HepG2 (cell line): ENCODE measurements at regions of chr10 and their contacts with region 1.

Region 1: GRCh38 chr10:91632671-91633550 is at the start of gene PPP1R3C:
- DNase-seq: peak; percentile 87
- ATAC-seq: peak; percentile 98
- H3K4me3 ChIP-seq: peak within 1 kb of the TSS; percentile 69 to 87 (median 87)
- H3K27ac ChIP-seq: peak within 1 kb of the TSS; percentile 76
- H3K4me1 ChIP-seq: peaks cover 62% of the 10 kb centered on the region
- H3K27me3 ChIP-seq: no peaks in the 10 kb centered on the region
- CTCF ChIP-seq: peak; percentile 76
- EP300 ChIP-seq: 0 out of 4 replicates have a peak, but pooled peaks of 1 of the 2 experiments have one; percentile 2
- POLR2A ChIP-seq: peak; percentile 92 to 99
- RAD21 ChIP-seq: peak; percentile 55; the same call in 1 of the 2 replicates
- total RNA-seq, gene PPP1R3C: 14.8 and 18.7 TPM in 2 replicates

Region 2: GRCh38 chr10:91389636-91390512 is 243.0 kb before region 1 on chr10:
- CTCF ChIA-PET with region 1: interaction called, 12 read pairs
- POLR2A ChIA-PET with region 1: no interaction called
- in situ Hi-C with region 1: loop called (anchors 25 kb)
- intact Hi-C with region 1: loop called (anchors 1 kb)
- DNase-seq: peak; percentile 54
- ATAC-seq: peak; percentile 88
- H3K4me3 ChIP-seq: peak overlapping the region in 2 of 3 experiments; percentile 12 to 22; a peak in 2 of 6 replicates
- H3K27ac ChIP-seq: no peak overlapping the region
- H3K4me1 ChIP-seq: peaks cover 8% of the 10 kb centered on the region; the same call in 1 of the 2 replicates
- H3K27me3 ChIP-seq: peaks cover 0 to 9% of the 10 kb centered on the region in 2 experiments; a peak in 2 of 5 replicates
- CTCF ChIP-seq: peak; percentile 67
- EP300 ChIP-seq: no peak
- POLR2A ChIP-seq: no peak
- RAD21 ChIP-seq: 0 out of 2 replicates have a peak, but pooled peaks have one; percentile 26

Region 3: DNA sequence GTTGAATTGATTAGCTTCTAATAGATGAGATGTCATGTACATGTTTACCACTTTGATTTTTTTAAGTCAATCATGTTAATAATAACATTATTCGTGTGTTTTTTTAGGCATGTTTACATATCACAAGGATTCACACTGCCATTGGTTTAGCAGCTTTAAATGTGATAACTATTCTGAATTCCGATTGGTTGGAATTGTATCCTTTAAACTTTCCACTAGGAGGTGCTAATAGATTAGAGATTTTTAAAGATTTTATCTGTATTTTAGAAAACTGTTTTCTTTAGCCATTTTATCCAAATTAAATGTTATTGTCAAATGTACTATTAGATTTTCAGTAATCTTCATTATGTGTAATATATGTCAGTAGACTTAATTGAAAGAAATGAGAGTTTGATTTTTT is 139.6 kb before region 1 on chr10:
- CTCF ChIA-PET with region 1: interaction called, 40 read pairs
- POLR2A ChIA-PET with region 1: interaction called, 6 read pairs
- in situ Hi-C with region 1: loop called (anchors 5 kb)
- intact Hi-C with region 1: loop called (anchors 1 kb)
- DNase-seq: peak; percentile 41
- ATAC-seq: peak; percentile 50; the same call in 2 of the 3 replicates
- H3K4me3 ChIP-seq: no peak overlapping the region
- H3K27ac ChIP-seq: no peak overlapping the region
- H3K4me1 ChIP-seq: no peaks in the 10 kb centered on the region
- H3K27me3 ChIP-seq: no peaks in the 10 kb centered on the region
- CTCF ChIP-seq: peak; percentile 50
- EP300 ChIP-seq: no peak
- POLR2A ChIP-seq: no peak
- RAD21 ChIP-seq: no peak

Region 4: DNA sequence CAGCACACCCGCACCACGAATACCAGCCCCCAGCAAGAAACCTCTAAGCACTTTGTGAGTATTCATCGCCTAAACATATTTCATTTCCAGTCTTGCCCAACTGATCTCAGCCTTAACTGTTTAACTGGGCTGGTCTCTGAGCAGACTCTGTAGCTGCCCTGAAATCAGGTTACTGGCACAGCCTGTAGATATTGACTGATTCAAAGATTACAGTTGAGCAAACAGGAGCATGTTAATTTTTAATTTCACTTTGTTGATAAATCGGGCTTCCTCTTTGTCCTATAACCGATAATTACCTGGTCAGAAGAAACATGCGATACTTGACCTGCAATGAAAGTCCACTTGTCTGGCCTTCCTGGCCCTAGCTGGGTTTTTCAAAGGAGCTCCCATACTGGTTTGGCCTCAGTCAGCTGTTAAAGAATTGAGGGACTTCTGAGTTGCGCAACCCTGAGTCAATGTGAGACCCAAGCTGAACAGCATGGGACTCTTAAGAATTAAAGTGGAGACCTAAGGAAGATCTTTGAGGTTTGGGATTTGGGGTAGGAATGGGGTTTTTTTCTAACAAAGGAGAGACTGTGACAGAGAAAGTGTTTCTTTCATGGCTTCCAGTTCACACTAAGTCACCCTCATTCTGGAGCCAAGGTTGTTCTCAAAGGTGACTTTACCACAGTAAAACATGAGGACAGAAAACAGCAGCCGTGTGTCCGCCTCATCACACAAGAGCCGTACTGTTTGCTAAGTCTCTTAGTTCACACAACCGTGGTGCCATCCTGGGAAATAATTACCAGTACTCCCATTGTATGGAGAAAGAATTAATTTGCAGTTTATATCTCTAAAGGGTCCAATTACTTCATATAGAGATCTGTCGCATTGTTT is 76.0 kb before region 1 on chr10:
- CTCF ChIA-PET with region 1: interaction called, 31 read pairs
- POLR2A ChIA-PET with region 1: interaction called, 23 read pairs
- in situ Hi-C with region 1: loop called (anchors 5 kb)
- intact Hi-C with region 1: loop called (anchors 1 kb)
- DNase-seq: peak; percentile 95
- ATAC-seq: peak; percentile 95
- H3K4me3 ChIP-seq: peak overlapping the region in 1 of 3 experiments; percentile 34; a peak in 1 of 6 replicates
- H3K27ac ChIP-seq: peak overlapping the region; percentile 87
- H3K4me1 ChIP-seq: peaks cover 96% of the 10 kb centered on the region
- H3K27me3 ChIP-seq: no peaks in the 10 kb centered on the region
- CTCF ChIP-seq: no peak
- EP300 ChIP-seq: peak; percentile 31 to 94; a peak in 2 of 4 replicates
- POLR2A ChIP-seq: 0 out of 4 replicates have a peak, but pooled peaks have one; percentile 11 to 33
- RAD21 ChIP-seq: peak; percentile 19; the same call in 1 of the 2 replicates

Region 5: GRCh38 chr10:91607646-91608403 is 25.1 kb before region 1 on chr10:
- CTCF ChIA-PET with region 1: no interaction called
- POLR2A ChIA-PET with region 1: interaction called, 35 read pairs
- in situ Hi-C with region 1: no loop called
- intact Hi-C with region 1: no loop called
- DNase-seq: no peak
- ATAC-seq: peak; percentile 39
- H3K4me3 ChIP-seq: peak overlapping the region in 1 of 3 experiments; percentile 52; a peak in 1 of 6 replicates
- H3K27ac ChIP-seq: no peak overlapping the region
- H3K4me1 ChIP-seq: peaks cover 37% of the 10 kb centered on the region
- H3K27me3 ChIP-seq: no peaks in the 10 kb centered on the region
- CTCF ChIP-seq: no peak
- EP300 ChIP-seq: no peak
- POLR2A ChIP-seq: no peak
- RAD21 ChIP-seq: no peak

Region 6: GRCh38 chr10:91621483-91622113 is 11.3 kb before region 1 on chr10:
- CTCF ChIA-PET with region 1: no interaction called
- POLR2A ChIA-PET with region 1: interaction called, 16 read pairs
- in situ Hi-C with region 1: no loop called
- intact Hi-C with region 1: no loop called
- DNase-seq: no peak
- ATAC-seq: no peak
- H3K4me3 ChIP-seq: no peak overlapping the region
- H3K27ac ChIP-seq: no peak overlapping the region
- H3K4me1 ChIP-seq: peaks cover 8% of the 10 kb centered on the region; the same call in 1 of the 2 replicates
- H3K27me3 ChIP-seq: peaks cover 0 to 1% of the 10 kb centered on the region in 2 experiments; a peak in 2 of 5 replicates
- CTCF ChIP-seq: no peak
- EP300 ChIP-seq: no peak
- POLR2A ChIP-seq: no peak
- RAD21 ChIP-seq: no peak

Region 7: GRCh38 chr10:91672021-91672608 is 39.2 kb after region 1 on chr10:
- CTCF ChIA-PET with region 1: no interaction called
- POLR2A ChIA-PET with region 1: no interaction called
- in situ Hi-C with region 1: no loop called
- intact Hi-C with region 1: no loop called
- DNase-seq: no peak
- ATAC-seq: peak; percentile 58; the same call in 2 of the 3 replicates
- H3K4me3 ChIP-seq: no peak overlapping the region
- H3K27ac ChIP-seq: no peak overlapping the region
- H3K4me1 ChIP-seq: no peaks in the 10 kb centered on the region
- H3K27me3 ChIP-seq: no peaks in the 10 kb centered on the region
- CTCF ChIP-seq: no peak
- EP300 ChIP-seq: no peak
- POLR2A ChIP-seq: no peak
- RAD21 ChIP-seq: no peak

Region 8: DNA sequence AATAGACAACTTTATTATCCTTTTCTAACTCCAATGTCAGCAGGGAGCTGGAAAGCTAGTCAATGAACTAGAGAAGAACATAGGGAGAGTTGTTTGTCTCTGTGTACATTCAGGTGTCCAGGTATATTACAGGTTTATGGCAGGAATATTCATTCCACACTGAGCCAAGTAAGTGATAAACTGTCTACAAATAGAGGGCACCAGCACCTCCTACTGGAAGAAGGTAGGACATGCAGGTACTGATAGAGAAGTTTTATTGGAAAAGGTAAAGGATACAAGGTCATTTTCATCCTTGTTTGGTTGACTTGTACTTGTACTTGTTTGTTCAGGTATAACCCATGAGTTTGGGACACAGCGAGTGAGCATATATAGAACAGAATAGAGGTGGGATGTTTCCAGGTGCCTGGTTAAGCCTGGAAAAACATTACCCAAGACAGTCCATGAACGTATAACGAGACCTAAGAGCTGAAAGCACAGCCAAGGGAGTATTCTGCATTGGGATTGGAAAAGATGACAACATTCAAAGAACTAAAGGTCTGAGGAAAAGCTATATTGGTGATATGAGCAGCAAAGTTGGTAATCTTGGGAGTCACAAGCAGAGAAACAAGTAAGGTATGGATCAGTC is 61.4 kb after region 1 on chr10:
- CTCF ChIA-PET with region 1: no interaction called
- POLR2A ChIA-PET with region 1: no interaction called
- in situ Hi-C with region 1: no loop called
- intact Hi-C with region 1: no loop called
- DNase-seq: peak; percentile 38
- ATAC-seq: peak; percentile 50; the same call in 2 of the 3 replicates
- H3K4me3 ChIP-seq: no peak overlapping the region
- H3K27ac ChIP-seq: no peak overlapping the region
- H3K4me1 ChIP-seq: no peaks in the 10 kb centered on the region
- H3K27me3 ChIP-seq: no peaks in the 10 kb centered on the region
- CTCF ChIP-seq: peak; percentile 76
- EP300 ChIP-seq: no peak
- POLR2A ChIP-seq: no peak
- RAD21 ChIP-seq: no peak

Region 9: GRCh38 chr10:91724933-91725332 is 92.0 kb after region 1 on chr10:
- CTCF ChIA-PET with region 1: no interaction called
- POLR2A ChIA-PET with region 1: no interaction called
- in situ Hi-C with region 1: no loop called
- intact Hi-C with region 1: no loop called
- DNase-seq: no peak
- ATAC-seq: no peak
- H3K4me3 ChIP-seq: no peak overlapping the region
- H3K27ac ChIP-seq: no peak overlapping the region
- H3K4me1 ChIP-seq: no peaks in the 10 kb centered on the region
- H3K27me3 ChIP-seq: no peaks in the 10 kb centered on the region
- CTCF ChIP-seq: no peak
- EP300 ChIP-seq: no peak
- POLR2A ChIP-seq: no peak
- RAD21 ChIP-seq: no peak

Region 10: GRCh38 chr10:92404612-92405418 is 771.9 kb after region 1 on chr10:
- CTCF ChIA-PET with region 1: no interaction called
- POLR2A ChIA-PET with region 1: no interaction called
- in situ Hi-C with region 1: no loop called
- intact Hi-C with region 1: no loop called
- DNase-seq: no peak
- ATAC-seq: peak; percentile 76
- H3K4me3 ChIP-seq: peak overlapping the region in 1 of 3 experiments; percentile 38; a peak in 2 of 6 replicates
- H3K27ac ChIP-seq: no peak overlapping the region
- H3K4me1 ChIP-seq: no peaks in the 10 kb centered on the region
- H3K27me3 ChIP-seq: no peaks in the 10 kb centered on the region
- CTCF ChIP-seq: no peak
- EP300 ChIP-seq: no peak
- POLR2A ChIP-seq: no peak
- RAD21 ChIP-seq: no peak